Endothelial cell of umbilical vein (primary cell): ENCODE measurements at regions of chr17 and their contacts with region 1.

Region 1: DNA sequence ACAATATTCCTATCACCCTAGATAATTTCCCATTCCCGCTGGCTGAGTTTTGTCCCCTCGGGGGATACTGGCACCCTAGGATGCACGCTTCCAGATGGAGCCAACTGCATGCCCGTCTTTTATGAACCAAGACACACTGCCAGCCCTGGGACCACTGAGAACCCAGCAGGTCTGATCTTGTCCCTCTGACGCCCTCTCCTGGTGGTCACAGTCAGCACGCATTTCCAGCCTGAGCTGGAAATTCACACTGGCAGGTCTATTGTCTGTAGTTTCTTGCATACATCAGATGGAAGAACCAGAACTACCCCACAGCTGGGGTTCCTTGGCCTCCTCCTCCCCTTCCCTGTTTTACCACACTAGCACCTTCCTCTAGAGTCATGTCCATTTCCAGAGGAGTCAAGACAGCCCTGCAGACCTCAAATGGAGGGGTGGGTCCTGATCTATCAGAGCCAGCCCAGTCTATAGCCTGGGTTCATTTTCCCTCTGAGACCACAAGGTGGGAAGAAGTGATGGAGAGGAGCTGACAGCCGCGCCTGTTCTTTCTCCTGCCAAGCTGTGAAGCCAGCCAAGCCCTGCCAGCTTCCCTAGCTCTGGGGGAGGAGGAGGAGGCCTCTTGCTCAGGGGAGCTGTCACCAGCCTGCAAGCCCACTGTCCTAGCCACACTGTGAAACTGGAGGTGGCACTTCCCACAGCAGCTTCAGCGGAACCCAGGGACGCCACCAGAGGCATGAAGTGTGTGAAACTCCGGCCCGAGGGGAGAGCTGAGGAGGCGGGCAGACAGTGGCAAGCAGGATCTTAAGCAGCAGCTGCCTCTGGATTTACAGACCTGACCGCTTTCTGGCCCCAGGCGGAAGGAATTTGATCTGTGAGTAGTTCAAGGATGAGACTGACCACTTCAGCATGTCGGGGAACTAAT is 29.3 kb downstream of the MXRA7 start:
- DNase-seq: peak; percentile 72
- H3K4me3 ChIP-seq: no peak overlapping the region
- H3K27ac ChIP-seq: no peak overlapping the region
- H3K4me1 ChIP-seq: no peaks in the 10 kb centered on the region
- H3K27me3 ChIP-seq: no peaks in the 10 kb centered on the region
- CTCF ChIP-seq: peak; percentile 82 to 84
- POLR2A ChIP-seq: no peak

Region 2: GRCh38 chr17:76414334-76415295 is 266.9 kb before region 1 on chr17:
- CTCF ChIA-PET with region 1: no interaction called
- POLR2A ChIA-PET with region 1: no interaction called
- dilution Hi-C with region 1: no loop called
- intact Hi-C with region 1: no loop called
- DNase-seq: peak; percentile 44
- H3K4me3 ChIP-seq: no peak overlapping the region
- H3K27ac ChIP-seq: no peak overlapping the region
- H3K4me1 ChIP-seq: no peaks in the 10 kb centered on the region
- H3K27me3 ChIP-seq: no peaks in the 10 kb centered on the region
- CTCF ChIP-seq: no peak
- POLR2A ChIP-seq: no peak

Region 3: DNA sequence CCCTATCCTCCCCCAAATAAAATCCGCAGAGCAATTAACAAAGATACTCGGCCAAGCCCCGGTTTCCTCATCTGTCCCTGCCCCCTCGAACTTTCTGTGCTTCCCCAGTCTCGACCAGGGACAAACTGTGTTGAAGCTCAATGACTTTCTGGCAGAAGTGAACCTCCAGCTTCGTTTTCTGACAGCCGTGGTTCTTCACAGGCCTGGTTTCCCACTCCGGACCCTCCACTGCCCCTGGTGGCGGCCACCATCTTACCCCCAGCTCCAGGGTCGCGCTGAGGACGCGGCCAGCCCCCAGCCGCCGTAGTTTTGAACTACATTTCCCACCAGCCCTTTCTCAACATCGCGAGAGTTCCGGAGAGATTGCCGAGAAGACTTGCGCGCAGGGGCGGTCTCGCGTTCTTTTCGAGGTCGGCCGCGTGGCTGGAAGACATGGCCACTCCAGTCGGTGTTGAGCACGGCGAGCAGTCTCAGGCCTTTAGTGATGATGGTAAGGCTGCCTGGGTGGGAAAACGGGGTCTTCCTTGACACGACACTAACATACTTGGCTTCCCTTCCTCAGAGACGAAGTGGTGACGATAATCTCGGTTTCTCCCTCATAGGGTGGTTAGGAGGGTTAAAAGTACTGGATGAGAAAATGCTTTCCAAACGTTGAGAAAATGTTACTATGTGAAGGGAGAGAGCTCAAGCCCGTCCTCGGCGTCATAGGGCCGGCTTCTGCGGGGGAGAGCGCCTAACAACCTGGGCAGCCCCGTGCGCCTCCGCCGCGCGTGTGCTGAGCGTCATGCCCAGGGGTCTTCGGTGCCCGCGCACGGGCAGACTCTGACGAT is 123.9 kb before region 1 on chr17:
- CTCF ChIA-PET with region 1: interaction called, 27 read pairs
- POLR2A ChIA-PET with region 1: no interaction called
- dilution Hi-C with region 1: no loop called
- intact Hi-C with region 1: loop called (anchors 1 kb)
- DNase-seq: peak; percentile 98
- H3K4me3 ChIP-seq: peak overlapping the region; percentile 66 to 94 (median 78)
- H3K27ac ChIP-seq: peak overlapping the region; percentile 68
- H3K4me1 ChIP-seq: peaks cover 40% of the 10 kb centered on the region
- H3K27me3 ChIP-seq: no peaks in the 10 kb centered on the region
- CTCF ChIP-seq: peak; percentile 80 to 88
- POLR2A ChIP-seq: peak; percentile 97

Region 4: DNA sequence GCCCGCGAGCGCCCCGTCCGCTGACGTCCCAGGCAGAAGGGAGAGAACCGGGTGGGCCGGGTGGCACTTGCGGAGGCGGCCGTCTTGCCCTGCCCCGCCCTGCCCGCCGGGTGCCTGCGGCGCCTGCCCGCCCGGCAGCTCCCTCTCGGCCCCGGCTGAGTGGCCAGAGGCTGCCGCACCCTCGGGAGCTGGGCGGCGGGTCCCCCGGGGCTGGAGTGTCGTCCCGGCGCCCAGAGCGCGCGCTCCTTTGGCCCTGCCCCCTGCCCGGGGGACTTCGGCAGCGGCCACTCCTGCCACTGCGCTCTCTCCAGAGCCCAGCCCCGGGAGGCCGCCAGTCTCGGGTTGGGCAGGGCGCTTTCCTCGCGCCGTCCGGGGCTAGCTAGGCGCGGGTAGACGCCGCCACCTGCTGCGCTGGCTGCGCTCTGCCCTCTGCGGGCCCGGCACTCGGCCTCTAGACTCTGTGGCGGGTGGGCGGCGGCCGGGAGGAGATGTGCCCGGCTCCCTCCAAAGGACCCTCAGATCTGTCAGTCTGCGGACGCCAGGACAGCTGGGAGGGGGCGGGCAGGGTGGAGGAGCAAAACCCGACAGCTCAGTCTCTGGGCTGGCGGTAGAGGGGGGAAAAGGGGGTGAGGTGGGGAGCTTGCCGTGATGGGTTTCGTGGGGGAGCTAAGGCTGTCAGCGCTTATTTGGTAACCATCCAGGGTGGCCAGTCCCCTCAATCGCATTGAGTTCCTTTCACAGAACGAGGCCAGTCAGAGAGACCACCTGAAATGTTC is 95.5 kb before region 1 on chr17 and contains the start of gene ST6GALNAC2:
- CTCF ChIA-PET with region 1: interaction called, 13 read pairs
- POLR2A ChIA-PET with region 1: no interaction called
- dilution Hi-C with region 1: no loop called
- intact Hi-C with region 1: no loop called
- DNase-seq: peak; percentile 50
- H3K4me3 ChIP-seq: peak within 1 kb of the TSS; percentile 17 to 37 (median 35)
- H3K27ac ChIP-seq: no peak within 1 kb of the TSS
- H3K4me1 ChIP-seq: peaks cover 5% of the 10 kb centered on the region
- H3K27me3 ChIP-seq: peaks cover 16 to 18% of the 10 kb centered on the region in 2 experiments
- CTCF ChIP-seq: peak; percentile 21 to 55
- POLR2A ChIP-seq: no peak
- total RNA-seq, gene ST6GALNAC2: 0.69 and 1.7 TPM in 2 replicates

Region 5: GRCh38 chr17:76643553-76644148 is 37.8 kb before region 1 on chr17 and contains the start of gene ST6GALNAC1:
- CTCF ChIA-PET with region 1: no interaction called
- POLR2A ChIA-PET with region 1: no interaction called
- dilution Hi-C with region 1: no loop called
- intact Hi-C with region 1: no loop called
- DNase-seq: peak; percentile 26
- H3K4me3 ChIP-seq: no peak within 1 kb of the TSS
- H3K27ac ChIP-seq: no peak within 1 kb of the TSS
- H3K4me1 ChIP-seq: no peaks in the 10 kb centered on the region
- H3K27me3 ChIP-seq: peaks cover 3 to 9% of the 10 kb centered on the region in 2 experiments
- CTCF ChIP-seq: no peak
- POLR2A ChIP-seq: no peak
- total RNA-seq, gene ST6GALNAC1: 0.55 TPM in 1 of 2 replicates, not detected in the other

Region 6: DNA sequence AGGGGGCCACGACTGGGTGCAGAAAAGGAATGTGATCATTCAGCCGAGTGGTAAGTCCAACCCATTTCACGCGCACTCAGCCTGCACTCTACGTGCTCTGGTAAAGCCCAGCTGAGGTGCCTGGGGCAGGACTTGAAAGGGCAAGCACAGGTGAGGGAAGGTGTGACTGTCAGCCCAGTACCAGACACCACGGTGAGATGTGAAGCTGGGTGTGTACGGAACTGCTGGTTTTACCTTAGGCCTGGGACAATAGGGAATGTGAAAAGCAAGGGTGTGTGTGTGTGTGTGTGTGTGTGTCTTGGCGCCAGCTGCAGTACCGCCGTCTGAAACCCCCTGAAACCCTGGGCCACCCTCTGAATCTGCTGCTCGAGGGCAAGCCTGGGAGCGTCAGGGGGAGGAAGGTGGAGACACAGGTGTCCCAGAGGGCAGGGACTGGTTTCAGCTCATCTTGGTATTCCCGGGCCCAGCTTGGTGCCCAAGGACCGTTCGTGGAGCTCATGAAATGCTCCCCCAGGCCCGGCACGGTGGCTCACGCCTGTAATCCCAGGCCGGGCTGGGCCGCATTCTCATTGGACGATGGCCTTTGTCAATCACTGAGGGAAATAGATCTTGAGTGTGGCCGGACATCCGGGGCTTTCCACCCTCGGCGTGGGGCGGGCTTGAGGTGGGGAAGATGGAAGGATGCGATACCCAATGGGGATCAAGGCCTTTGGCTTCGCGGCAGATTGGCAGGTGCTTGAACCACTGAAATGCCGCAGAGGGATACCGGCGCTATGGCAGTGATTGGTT is 10.2 kb before region 1 on chr17:
- CTCF ChIA-PET with region 1: interaction called, 30 read pairs
- POLR2A ChIA-PET with region 1: interaction called, 3 read pairs
- dilution Hi-C with region 1: no loop called
- intact Hi-C with region 1: no loop called
- DNase-seq: peak; percentile 100
- H3K4me3 ChIP-seq: peak overlapping the region in 2 of 3 experiments; percentile 19 to 89
- H3K27ac ChIP-seq: peak overlapping the region; percentile 51
- H3K4me1 ChIP-seq: peaks cover 11% of the 10 kb centered on the region
- H3K27me3 ChIP-seq: peaks cover 0 to 5% of the 10 kb centered on the region in 2 experiments
- CTCF ChIP-seq: no peak
- POLR2A ChIP-seq: peak; percentile 67

Region 7: GRCh38 chr17:76696763-76697701 is 15.6 kb after region 1 on chr17:
- CTCF ChIA-PET with region 1: interaction called, 26 read pairs
- POLR2A ChIA-PET with region 1: no interaction called
- dilution Hi-C with region 1: no loop called
- intact Hi-C with region 1: no loop called
- DNase-seq: peak; percentile 76
- H3K4me3 ChIP-seq: no peak overlapping the region
- H3K27ac ChIP-seq: peak overlapping the region; percentile 84
- H3K4me1 ChIP-seq: peaks cover 41% of the 10 kb centered on the region
- H3K27me3 ChIP-seq: no peaks in the 10 kb centered on the region
- CTCF ChIP-seq: no peak
- POLR2A ChIP-seq: no peak

Region 8: DNA sequence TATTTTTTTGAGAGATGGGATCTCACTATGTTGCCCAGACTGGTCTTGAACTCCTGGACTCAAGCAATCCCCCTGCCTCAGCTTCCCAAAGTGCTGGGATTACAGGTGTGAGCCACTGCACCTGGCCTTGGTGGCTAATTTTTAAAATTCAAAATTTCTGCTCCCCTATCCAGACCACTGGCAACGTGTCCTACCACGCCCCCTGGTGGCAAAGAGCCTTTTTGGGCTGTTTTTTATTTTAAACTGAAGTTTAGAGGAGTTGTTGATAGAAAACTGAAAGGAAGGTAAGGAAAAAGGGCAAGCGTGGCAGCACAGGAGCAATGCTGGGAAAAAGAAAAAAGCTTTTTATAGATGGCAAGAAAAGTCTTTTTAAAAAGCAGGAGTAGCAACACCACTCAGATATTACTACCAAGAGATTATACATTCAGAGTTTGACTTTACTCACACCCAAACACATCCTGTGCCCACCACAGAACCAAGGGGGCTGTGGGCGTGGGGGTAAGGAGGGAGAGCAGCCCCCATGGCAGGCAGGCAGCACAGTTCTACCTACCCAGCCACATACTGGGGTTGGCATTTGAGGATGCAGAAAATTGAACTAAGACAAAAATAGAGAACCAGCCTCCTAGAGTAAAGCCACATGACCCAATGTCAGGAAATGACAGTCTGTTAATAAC is 33.5 kb after region 1 on chr17:
- CTCF ChIA-PET with region 1: interaction called, 43 read pairs
- POLR2A ChIA-PET with region 1: no interaction called
- dilution Hi-C with region 1: no loop called
- intact Hi-C with region 1: loop called (anchors 1 kb)
- DNase-seq: peak; percentile 57
- H3K4me3 ChIP-seq: no peak overlapping the region
- H3K27ac ChIP-seq: no peak overlapping the region
- H3K4me1 ChIP-seq: peaks cover 16% of the 10 kb centered on the region
- H3K27me3 ChIP-seq: no peaks in the 10 kb centered on the region
- CTCF ChIP-seq: peak; percentile 70 to 72
- POLR2A ChIP-seq: no peak

Region 9: GRCh38 chr17:76737082-76737675 is 55.7 kb after region 1 on chr17 and contains the start of gene SRSF2:
- CTCF ChIA-PET with region 1: no interaction called
- POLR2A ChIA-PET with region 1: no interaction called
- dilution Hi-C with region 1: no loop called
- intact Hi-C with region 1: no loop called
- DNase-seq: peak; percentile 99
- H3K4me3 ChIP-seq: peak within 1 kb of the TSS; percentile 82 to 96 (median 90)
- H3K27ac ChIP-seq: peak within 1 kb of the TSS; percentile 92
- H3K4me1 ChIP-seq: peaks cover 38% of the 10 kb centered on the region
- H3K27me3 ChIP-seq: no peaks in the 10 kb centered on the region
- CTCF ChIP-seq: no peak
- POLR2A ChIP-seq: peak; percentile 100
- total RNA-seq, gene SRSF2: 303 and 307 TPM in 2 replicates